Left ventricle myocardium superior (tissue), 1 donor: ENCODE measurements at regions of chr17 and their contacts with region 1.

Region 1: DNA sequence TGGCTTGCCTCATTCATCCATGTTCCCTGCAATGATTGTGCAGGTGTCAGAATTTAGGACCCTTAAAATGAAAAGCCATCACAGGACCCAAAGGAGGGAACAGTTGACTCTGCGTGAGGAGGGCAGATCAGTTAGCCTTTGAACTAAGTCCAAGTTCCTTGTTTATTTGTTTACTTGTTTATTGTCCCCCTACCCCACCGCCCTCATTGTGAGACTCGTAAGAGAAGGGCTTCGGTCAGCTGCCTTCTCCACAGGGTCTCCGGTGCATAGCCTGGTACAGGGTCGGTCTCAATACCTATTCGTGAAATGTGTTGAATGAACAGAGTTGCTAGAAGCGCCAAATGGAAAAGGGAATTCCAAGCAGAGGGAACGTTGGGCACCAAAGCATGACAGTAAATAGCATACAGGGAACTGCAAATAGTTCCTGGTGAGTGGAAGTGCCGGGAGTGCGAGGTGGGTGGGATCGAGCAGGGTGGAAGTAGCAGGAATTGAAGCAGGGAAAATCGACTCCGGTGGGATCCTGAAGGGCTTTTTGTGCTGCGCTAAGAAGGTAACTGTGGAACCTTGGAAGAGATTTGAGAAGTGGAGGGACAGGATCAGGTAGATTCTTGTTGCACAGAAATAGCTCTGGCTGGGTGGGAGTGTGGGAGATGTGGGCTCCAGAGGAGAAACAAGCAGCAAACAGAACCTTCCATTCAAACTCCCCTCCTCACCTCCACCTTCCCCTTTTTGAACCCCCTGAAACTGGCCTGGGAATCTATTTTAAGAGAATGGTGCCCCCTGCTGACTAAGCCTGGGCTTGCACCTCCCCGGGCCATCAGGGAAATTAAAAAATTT is 12.7 kb downstream of the SLC35B1 start:
- DNase-seq: peak; percentile 67
- ATAC-seq: peak; percentile 5

Region 2: DNA sequence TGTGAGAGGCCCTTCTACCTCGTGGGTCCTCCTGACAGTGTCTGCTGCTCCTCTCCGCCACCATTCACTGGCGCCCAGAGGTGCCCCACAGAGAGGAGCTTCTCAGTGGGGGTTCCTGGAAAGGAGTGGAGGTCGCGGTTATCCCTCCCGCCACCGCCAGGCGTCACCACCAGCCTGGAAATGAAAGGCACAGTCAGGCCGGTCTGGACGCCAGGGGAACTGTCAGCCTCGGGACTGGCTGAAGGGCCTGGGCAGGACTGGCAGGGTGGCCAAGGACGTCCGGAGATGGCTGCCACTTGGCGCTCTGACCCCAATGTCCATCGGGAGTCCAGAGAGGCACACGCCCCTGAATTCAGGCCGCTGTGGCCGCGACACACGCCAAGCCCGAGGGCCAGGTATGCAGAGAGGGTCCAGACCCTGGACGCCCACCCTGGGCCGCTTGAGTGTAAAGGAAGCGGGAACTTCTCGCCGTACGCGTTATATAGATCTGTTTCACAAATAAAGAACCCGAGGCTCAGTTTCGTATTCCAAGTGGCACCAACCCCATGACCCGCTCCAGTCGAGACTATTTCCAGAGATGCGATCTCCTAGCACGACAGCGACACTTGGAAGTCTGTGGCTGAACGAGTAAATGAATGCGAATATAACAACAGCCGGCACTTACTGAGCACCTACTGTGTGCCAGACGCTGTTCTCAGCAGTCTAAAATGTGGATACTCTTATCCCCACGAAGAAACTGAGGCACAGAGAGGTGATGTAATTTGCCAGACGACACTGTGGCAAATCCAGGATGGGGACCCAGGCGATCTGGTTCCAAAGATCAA is 127.0 kb before region 1 on chr17:
- intact Hi-C with region 1: loop called (anchors 1 kb)
- DNase-seq: peak; percentile 93
- ATAC-seq: peak; percentile 70

Region 3: GRCh38 chr17:49880291-49881053 is 185.4 kb after region 1 on chr17:
- intact Hi-C with region 1: no loop called
- DNase-seq: peak; percentile 82
- ATAC-seq: peak; percentile 95